Caco-2 (cell line): ENCODE measurements at regions of chr13 and their contacts with region 1.

Region 1: DNA sequence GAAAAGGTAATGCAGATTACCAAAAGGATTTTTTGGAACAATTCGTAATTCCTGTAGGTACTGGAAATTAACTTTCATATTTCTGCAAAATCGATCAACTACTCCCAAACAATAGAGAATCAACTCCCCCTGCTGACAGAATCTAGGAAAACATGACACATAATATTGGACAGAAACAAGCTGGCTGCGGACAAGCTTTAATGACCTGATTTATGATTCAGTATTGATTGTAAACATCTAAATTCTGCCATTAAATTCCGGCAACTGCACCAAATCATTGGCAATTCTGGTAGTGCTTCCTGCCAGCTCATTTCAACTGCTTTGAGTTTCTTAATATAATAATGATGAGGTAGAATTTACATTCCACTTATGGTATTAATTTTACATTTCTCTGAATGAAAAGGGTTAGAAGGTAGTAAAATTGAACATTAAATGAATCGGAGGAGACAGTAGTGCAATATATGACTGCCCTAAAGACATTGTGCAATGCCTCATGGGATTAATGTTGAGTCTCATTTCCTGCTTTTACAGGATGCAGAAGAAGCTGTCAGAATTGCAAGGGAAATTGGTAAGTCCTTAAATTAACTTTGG is 146.5 kb downstream of the PCCA start:
- DNase-seq: peak in 1 of 2 experiments; percentile 69
- H3K4me3 ChIP-seq: no peak overlapping the region
- H3K4me3 Mint-ChIP-seq: no peak overlapping the region
- H3K27ac Mint-ChIP-seq: no peak overlapping the region
- H3K4me1 ChIP-seq: peaks cover 19% of the 10 kb centered on the region
- H3K4me1 Mint-ChIP-seq: peaks cover 10% of the 10 kb centered on the region
- H3K27me3 ChIP-seq: no peaks in the 10 kb centered on the region
- H3K27me3 Mint-ChIP-seq: no peaks in the 10 kb centered on the region
- CTCF ChIP-seq: peak; percentile 67 to 69

Region 2: GRCh38 chr13:99916366-99917103 is 318.9 kb before region 1 on chr13:
- CTCF ChIA-PET with region 1: interaction called, 12 read pairs
- POLR2A ChIA-PET with region 1: no interaction called
- intact Hi-C with region 1: loop called (anchors 1 kb)
- DNase-seq: peak in 1 of 2 experiments; percentile 65
- H3K4me3 ChIP-seq: no peak overlapping the region
- H3K4me3 Mint-ChIP-seq: no peak overlapping the region
- H3K27ac Mint-ChIP-seq: no peak overlapping the region
- H3K4me1 ChIP-seq: no peaks in the 10 kb centered on the region
- H3K4me1 Mint-ChIP-seq: no peaks in the 10 kb centered on the region
- H3K27me3 ChIP-seq: no peaks in the 10 kb centered on the region
- H3K27me3 Mint-ChIP-seq: peaks cover 12% of the 10 kb centered on the region
- CTCF ChIP-seq: peak; percentile 93 to 99

Region 3: DNA sequence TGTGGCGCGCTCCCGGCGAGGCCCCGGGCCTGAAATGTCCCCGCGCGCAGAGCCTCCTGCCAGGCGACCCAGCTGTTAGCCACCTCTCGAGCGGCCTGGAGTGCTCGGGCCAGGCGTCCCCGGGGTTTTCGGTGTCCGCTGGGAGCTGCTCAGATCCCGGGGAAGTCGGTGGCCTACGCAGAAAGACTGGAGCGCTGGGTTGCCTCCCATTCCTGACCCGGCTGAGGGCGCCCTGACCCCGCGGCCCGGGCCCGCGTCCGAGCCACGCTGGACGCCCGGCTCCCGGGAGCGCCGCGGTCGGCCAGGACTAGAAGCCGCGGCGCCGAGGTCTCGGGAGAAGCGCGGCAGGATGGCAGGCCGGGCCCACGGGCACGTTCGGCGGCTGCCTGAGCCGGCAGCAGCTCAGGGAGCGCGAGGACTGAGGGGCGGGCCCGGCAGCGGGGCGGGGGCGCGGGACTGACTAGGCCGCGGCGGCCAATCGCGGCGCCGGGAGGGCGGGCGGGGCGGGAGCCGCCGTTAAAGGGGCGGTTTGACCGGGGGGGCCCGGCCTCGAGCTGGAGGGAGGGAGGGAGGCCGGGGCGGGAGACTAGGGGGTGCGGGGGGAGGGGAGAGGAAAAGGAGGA is 255.1 kb before region 1 on chr13:
- CTCF ChIA-PET with region 1: interaction called, 6 read pairs
- POLR2A ChIA-PET with region 1: no interaction called
- intact Hi-C with region 1: loop called (anchors 2 kb)
- DNase-seq: peak; percentile 70 to 80
- H3K4me3 ChIP-seq: peak overlapping the region; percentile 59
- H3K4me3 Mint-ChIP-seq: peak overlapping the region; percentile 61
- H3K27ac Mint-ChIP-seq: no peak overlapping the region
- H3K4me1 ChIP-seq: peaks cover 24% of the 10 kb centered on the region
- H3K4me1 Mint-ChIP-seq: peaks cover 9% of the 10 kb centered on the region
- H3K27me3 ChIP-seq: peaks cover 16% of the 10 kb centered on the region
- H3K27me3 Mint-ChIP-seq: peaks cover 36% of the 10 kb centered on the region
- CTCF ChIP-seq: peak in 1 of 2 experiments; percentile 24

Region 4: GRCh38 chr13:100039740-100040139 is 195.7 kb before region 1 on chr13:
- CTCF ChIA-PET with region 1: interaction called, 3 read pairs
- POLR2A ChIA-PET with region 1: no interaction called
- intact Hi-C with region 1: loop called (anchors 5 kb)
- DNase-seq: no peak
- H3K4me3 ChIP-seq: no peak overlapping the region
- H3K4me3 Mint-ChIP-seq: peak overlapping the region; percentile 15
- H3K27ac Mint-ChIP-seq: no peak overlapping the region
- H3K4me1 ChIP-seq: peaks cover 8% of the 10 kb centered on the region
- H3K4me1 Mint-ChIP-seq: peaks cover 14% of the 10 kb centered on the region
- H3K27me3 ChIP-seq: no peaks in the 10 kb centered on the region
- H3K27me3 Mint-ChIP-seq: no peaks in the 10 kb centered on the region
- CTCF ChIP-seq: no peak

Region 5: GRCh38 chr13:100098445-100099116 is 136.8 kb before region 1 on chr13:
- CTCF ChIA-PET with region 1: no interaction called
- POLR2A ChIA-PET with region 1: no interaction called
- intact Hi-C with region 1: loop called (anchors 2 kb)
- DNase-seq: peak in 1 of 2 experiments; percentile 32
- H3K4me3 ChIP-seq: no peak overlapping the region
- H3K4me3 Mint-ChIP-seq: no peak overlapping the region
- H3K27ac Mint-ChIP-seq: peak overlapping the region; percentile 93
- H3K4me1 ChIP-seq: peaks cover 23% of the 10 kb centered on the region
- H3K4me1 Mint-ChIP-seq: peaks cover 30% of the 10 kb centered on the region
- H3K27me3 ChIP-seq: no peaks in the 10 kb centered on the region
- H3K27me3 Mint-ChIP-seq: no peaks in the 10 kb centered on the region
- CTCF ChIP-seq: no peak

Region 6: GRCh38 chr13:100290165-100290801 is 54.9 kb after region 1 on chr13:
- CTCF ChIA-PET with region 1: no interaction called
- POLR2A ChIA-PET with region 1: no interaction called
- intact Hi-C with region 1: no loop called
- DNase-seq: no peak
- H3K4me3 ChIP-seq: no peak overlapping the region
- H3K4me3 Mint-ChIP-seq: no peak overlapping the region
- H3K27ac Mint-ChIP-seq: no peak overlapping the region
- H3K4me1 ChIP-seq: no peaks in the 10 kb centered on the region
- H3K4me1 Mint-ChIP-seq: no peaks in the 10 kb centered on the region
- H3K27me3 ChIP-seq: no peaks in the 10 kb centered on the region
- H3K27me3 Mint-ChIP-seq: no peaks in the 10 kb centered on the region
- CTCF ChIP-seq: no peak